Posterior vena cava (tissue), 2 donors: ENCODE measurements at regions of chr6 and their contacts with region 1.

Region 1: DNA sequence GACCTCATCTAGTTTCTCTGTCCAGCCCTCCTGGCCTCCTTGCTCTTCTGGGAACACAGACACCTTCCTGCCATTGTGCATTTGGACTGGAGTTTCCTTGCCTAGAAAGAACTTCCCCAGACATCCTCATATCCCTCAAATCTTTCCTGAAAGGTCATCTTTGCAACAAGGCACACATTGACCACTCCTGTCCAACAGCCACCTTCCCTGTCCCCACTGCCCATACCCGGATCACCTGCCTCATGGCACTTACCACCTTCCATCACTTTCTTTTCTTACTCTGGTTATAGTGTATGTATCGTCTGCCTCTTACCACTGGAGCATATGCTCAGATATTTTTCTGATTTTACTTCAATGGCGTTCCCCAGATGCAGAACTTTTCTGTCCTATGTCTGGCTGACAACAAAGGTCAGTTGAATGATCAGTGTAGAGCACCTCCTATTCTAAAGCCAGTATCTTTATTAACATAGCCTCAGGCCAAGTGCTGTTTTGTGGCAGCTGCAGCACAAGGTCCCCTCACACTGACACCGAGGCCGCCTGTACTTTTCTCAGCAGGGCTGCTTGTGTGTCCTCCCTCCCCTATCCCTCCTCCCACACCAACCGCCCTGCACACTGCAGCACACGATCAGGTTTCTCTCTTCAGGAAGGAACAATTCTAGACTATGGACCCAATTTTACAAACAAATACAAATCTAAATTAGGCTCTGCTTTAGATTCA is 4.1 kb downstream of the HLA-C start:
- DNase-seq: no peak

Region 2: GRCh38 chr6:31216208-31216898 is 51.5 kb before region 1 on chr6:
- intact Hi-C with region 1: no loop called
- DNase-seq: no peak

Region 3: DNA sequence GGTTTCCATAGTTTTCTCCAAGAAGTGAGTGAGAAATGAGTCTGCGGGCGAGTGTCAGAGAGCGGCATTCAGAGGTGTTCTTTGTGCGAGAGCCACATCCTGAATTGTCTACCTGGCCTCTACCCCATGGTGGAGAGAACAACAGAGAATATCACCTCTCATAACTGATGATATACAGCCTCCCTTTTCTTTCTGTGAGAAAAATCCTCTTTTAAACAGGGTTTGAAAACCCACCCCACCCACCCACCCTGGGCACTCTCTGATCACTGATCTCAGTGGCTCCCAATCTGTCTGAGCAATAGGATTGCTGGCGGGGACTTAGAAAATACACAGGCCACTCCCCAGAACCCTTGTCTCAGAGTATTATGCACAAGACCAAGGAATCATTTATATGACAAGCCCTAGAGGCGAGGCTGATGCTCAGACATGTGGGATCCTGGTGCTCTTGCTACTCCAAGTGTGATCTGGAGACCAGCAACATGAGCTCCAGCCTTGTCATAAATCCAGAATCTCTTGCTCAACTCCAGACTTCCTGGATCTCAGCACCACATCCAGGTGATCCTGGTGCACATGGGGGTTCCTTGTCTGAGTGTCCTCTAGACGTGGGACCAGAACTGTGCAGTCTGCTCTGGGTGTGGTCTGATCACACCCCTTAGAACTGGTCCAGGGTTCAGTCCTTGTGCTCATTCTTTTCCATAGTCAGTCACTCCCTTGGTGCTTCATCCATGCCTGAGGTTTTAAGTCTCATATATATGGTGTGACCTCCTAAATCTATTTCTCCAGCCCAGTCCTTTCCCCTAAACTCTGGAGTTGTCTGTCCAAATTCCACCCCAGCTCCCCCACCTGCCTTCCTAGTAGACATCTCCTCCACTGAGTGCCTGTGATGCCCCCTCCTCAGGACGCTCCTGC is 83.8 kb after region 1 on chr6:
- intact Hi-C with region 1: loop called in 1 of 2 experiments (anchors 5 kb)
- DNase-seq: no peak